ENCODE measurements at regions of chr16 and their contacts with region 1.

Region 1: GRCh38 chr16:30075507-30076275 is at the start of gene PPP4C:
- DNase-seq: peak; percentile 85
- H3K4me3 ChIP-seq: peak within 1 kb of the TSS; percentile 58 to 78 (median 76)
- H3K27ac ChIP-seq: peak within 1 kb of the TSS; percentile 81
- H3K4me1 ChIP-seq: peaks cover 24% of the 10 kb centered on the region
- H3K27me3 ChIP-seq: no peaks in the 10 kb centered on the region
- CTCF ChIP-seq: no peak
- POLR2A ChIP-seq: peak; percentile 97
- total RNA-seq, gene PPP4C: 159 and 167 TPM in 2 replicates

Region 2: GRCh38 chr16:29678691-29679267 is 396.9 kb before region 1 on chr16 and contains the start of gene QPRT:
- CTCF ChIA-PET with region 1: no interaction called
- POLR2A ChIA-PET with region 1: no interaction called
- dilution Hi-C with region 1: no loop called
- intact Hi-C with region 1: no loop called
- DNase-seq: no peak
- H3K4me3 ChIP-seq: no peak within 1 kb of the TSS
- H3K27ac ChIP-seq: no peak within 1 kb of the TSS
- H3K4me1 ChIP-seq: no peaks in the 10 kb centered on the region
- H3K27me3 ChIP-seq: peaks cover 0 to 2% of the 10 kb centered on the region in 2 experiments
- CTCF ChIP-seq: no peak
- POLR2A ChIP-seq: no peak
- total RNA-seq, gene QPRT: 0.28 and 0.44 TPM in 2 replicates

Region 3: DNA sequence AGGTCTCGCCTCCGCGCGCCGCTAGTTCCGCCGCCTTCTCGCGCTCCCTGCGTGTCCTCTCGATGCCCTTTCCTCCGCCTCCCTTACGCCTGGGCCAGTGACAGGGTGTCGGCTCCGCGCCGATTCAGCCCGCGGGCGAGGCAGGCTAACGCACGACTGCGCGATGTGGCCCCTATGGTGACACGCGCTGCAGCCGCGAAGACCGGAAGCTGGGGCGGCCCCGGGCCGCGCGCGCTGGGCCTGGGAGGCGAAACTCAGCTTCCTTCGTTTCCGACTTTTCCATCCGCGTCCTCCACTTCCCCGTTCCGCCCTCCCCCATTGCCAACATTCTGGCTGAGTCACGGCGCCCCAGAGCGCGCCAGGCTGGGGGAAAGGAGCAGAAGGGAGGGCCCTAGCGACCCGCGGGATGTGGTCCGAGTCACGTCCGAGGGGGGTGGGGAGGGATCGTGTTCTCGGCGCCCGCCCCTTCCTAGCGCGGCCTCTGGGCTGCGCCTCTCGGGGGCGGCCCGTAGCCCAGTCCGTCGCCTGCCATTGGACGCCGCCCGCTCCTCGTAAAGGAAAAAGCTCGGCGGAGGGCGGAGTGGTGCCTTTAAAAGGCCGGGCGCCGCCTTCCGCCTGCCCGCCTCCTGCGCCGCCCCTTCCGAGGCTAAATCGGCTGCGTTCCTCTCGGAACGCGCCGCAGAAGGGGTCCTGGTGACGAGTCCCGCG is 10.4 kb before region 1 on chr16 and contains the start of gene ALDOA:
- CTCF ChIA-PET with region 1: interaction called, 8 read pairs
- POLR2A ChIA-PET with region 1: interaction called, 14 read pairs
- dilution Hi-C with region 1: no loop called
- intact Hi-C with region 1: loop called (anchors 1 kb)
- DNase-seq: peak; percentile 99
- H3K4me3 ChIP-seq: peak within 1 kb of the TSS; percentile 71 to 95 (median 91)
- H3K27ac ChIP-seq: peak within 1 kb of the TSS; percentile 78
- H3K4me1 ChIP-seq: peaks cover 29% of the 10 kb centered on the region
- H3K27me3 ChIP-seq: no peaks in the 10 kb centered on the region
- CTCF ChIP-seq: no peak
- POLR2A ChIP-seq: peak; percentile 98
- total RNA-seq, gene ALDOA: 1,029 and 1,114 TPM in 2 replicates

Measured in endothelial cell of umbilical vein (primary cell).